Activated CD4-positive, alpha-beta T cell treated with anti-CD3 and anti-CD28 coated beads for 36 hours (primary cell): ENCODE measurements at regions of chr12 and their contacts with region 1.

Region 1: DNA sequence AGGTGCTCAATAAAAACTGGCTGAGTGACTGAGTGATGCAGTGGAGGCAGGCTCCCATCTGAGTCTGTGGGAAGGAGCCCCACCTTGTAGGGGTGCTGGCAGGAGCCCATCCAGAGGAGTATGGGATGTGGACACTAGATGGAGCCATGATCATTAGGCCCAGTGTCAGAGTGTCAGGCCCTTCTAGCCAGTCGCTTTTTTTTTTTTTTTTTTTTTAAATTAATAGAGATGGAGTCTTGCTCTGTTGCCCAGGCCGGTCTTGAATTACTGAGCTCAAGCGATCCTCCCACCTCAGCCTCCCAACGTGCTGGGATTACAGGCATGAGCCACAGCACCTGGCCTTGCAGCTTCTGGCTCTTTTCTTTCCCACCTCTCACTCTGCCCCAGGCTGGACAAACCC is 11.5 kb downstream of the RITA1 start:
- DNase-seq: peak; percentile 76
- ATAC-seq: peak; percentile 99
- H3K4me3 Mint-ChIP-seq: no peak overlapping the region
- H3K27ac Mint-ChIP-seq: no peak overlapping the region
- H3K4me1 Mint-ChIP-seq: peaks cover 2% of the 10 kb centered on the region
- H3K27me3 Mint-ChIP-seq: no peaks in the 10 kb centered on the region

Region 2: DNA sequence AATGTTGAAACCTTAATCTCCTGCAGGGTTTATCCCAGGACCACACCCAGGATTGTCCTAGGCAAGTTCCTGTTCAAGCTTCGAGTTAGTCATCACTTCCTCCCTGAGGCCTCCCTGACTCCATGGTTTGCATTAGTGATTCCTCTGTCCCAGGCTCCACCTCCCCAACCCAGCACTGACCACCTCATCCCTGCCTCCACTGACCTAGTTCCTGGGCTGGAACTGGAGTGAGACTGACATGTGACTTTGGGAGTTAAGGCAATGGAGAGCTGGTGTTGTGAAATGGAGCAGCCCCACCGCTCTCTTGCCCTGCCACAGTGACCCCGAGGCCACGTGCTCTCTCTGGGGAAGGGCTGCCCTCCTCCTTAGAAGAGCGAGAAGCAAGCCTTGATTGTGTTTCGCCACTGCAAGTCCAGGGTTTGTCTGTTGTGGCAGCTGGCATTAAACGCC is 156.2 kb before region 1 on chr12:
- CTCF ChIA-PET with region 1: no interaction called
- POLR2A ChIA-PET with region 1: no interaction called
- intact Hi-C with region 1: no loop called
- DNase-seq: no peak
- ATAC-seq: no peak
- H3K4me3 Mint-ChIP-seq: no peak overlapping the region
- H3K27ac Mint-ChIP-seq: no peak overlapping the region
- H3K4me1 Mint-ChIP-seq: no peaks in the 10 kb centered on the region
- H3K27me3 Mint-ChIP-seq: no peaks in the 10 kb centered on the region

Region 3: GRCh38 chr12:113149361-113150150 is 47.4 kb before region 1 on chr12 and contains the start of gene CFAP73:
- CTCF ChIA-PET with region 1: no interaction called
- POLR2A ChIA-PET with region 1: no interaction called
- intact Hi-C with region 1: no loop called
- DNase-seq: peak; percentile 56
- ATAC-seq: no peak
- H3K4me3 Mint-ChIP-seq: no peak within 1 kb of the TSS
- H3K27ac Mint-ChIP-seq: no peak within 1 kb of the TSS
- H3K4me1 Mint-ChIP-seq: peaks cover 14% of the 10 kb centered on the region
- H3K27me3 Mint-ChIP-seq: peaks cover 11% of the 10 kb centered on the region
- total RNA-seq, gene CFAP73: 0.86 to 1.1 TPM

Region 4: DNA sequence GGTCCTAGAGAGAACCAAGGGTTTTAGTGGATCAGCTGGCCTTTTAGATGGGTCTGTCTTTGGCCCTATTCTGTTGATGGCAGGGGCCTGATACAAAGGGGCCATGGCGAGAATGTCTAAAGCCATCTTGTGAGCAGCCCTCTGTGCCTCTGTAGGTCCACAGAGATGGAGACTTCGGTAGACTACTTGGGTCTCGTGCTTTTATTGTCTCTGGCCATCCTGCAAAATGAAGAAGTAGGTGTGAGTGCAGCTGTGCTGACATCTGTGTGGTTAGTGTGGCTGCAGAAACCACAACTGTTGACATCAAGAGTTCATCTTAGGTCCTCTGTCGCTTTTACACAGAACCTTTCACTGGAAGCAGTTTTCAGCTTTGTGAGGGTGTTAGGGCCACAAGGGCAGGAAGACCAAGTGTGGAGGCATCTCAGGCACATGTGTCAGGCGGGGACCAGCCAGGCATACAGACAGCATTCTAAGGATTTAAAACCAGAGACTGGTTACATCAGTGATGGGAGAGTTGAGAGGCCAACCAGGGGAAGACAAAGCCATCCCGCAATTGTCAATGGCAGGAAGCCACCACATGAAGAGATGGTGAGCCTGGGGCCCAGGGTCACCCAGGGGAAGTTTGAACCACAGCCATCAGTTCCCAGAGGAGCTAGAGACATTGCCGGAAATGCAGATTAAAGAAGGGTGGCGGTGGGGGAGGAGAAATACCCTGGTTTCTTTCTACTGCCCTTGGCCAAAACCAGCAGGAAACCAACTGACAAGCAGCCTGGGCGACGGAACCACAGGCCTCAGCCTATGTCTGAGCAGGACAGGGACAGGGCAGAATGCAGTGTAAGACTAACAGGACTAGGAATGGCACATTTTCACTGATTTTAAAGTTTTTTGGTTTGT is 11.3 kb after region 1 on chr12:
- CTCF ChIA-PET with region 1: interaction called, 10 read pairs
- POLR2A ChIA-PET with region 1: no interaction called
- intact Hi-C with region 1: no loop called
- DNase-seq: peak; percentile 85
- ATAC-seq: peak; percentile 86
- H3K4me3 Mint-ChIP-seq: peak overlapping the region; percentile 45
- H3K27ac Mint-ChIP-seq: peak overlapping the region; percentile 95
- H3K4me1 Mint-ChIP-seq: peaks cover 54% of the 10 kb centered on the region
- H3K27me3 Mint-ChIP-seq: no peaks in the 10 kb centered on the region

Region 5: GRCh38 chr12:113239811-113240331 is 42.9 kb after region 1 on chr12:
- CTCF ChIA-PET with region 1: interaction called, 3 read pairs
- POLR2A ChIA-PET with region 1: interaction called, 10 read pairs
- intact Hi-C with region 1: no loop called
- DNase-seq: no peak
- ATAC-seq: no peak
- H3K4me3 Mint-ChIP-seq: no peak overlapping the region
- H3K27ac Mint-ChIP-seq: no peak overlapping the region
- H3K4me1 Mint-ChIP-seq: peaks cover 13% of the 10 kb centered on the region
- H3K27me3 Mint-ChIP-seq: no peaks in the 10 kb centered on the region

Region 6: GRCh38 chr12:113261847-113262470 is 65.0 kb after region 1 on chr12:
- CTCF ChIA-PET with region 1: interaction called, 3 read pairs
- POLR2A ChIA-PET with region 1: no interaction called
- intact Hi-C with region 1: loop called in 1 of 2 experiments (anchors 5 kb)
- DNase-seq: peak; percentile 63
- ATAC-seq: peak; percentile 84
- H3K4me3 Mint-ChIP-seq: no peak overlapping the region
- H3K27ac Mint-ChIP-seq: peak overlapping the region; percentile 79
- H3K4me1 Mint-ChIP-seq: peaks cover 38% of the 10 kb centered on the region
- H3K27me3 Mint-ChIP-seq: no peaks in the 10 kb centered on the region

Region 7: GRCh38 chr12:113292091-113292490 is 95.1 kb after region 1 on chr12:
- CTCF ChIA-PET with region 1: no interaction called
- POLR2A ChIA-PET with region 1: no interaction called
- intact Hi-C with region 1: loop called in 1 of 2 experiments (anchors 5 kb)
- DNase-seq: no peak
- ATAC-seq: no peak
- H3K4me3 Mint-ChIP-seq: no peak overlapping the region
- H3K27ac Mint-ChIP-seq: no peak overlapping the region
- H3K4me1 Mint-ChIP-seq: no peaks in the 10 kb centered on the region
- H3K27me3 Mint-ChIP-seq: no peaks in the 10 kb centered on the region

Region 8: DNA sequence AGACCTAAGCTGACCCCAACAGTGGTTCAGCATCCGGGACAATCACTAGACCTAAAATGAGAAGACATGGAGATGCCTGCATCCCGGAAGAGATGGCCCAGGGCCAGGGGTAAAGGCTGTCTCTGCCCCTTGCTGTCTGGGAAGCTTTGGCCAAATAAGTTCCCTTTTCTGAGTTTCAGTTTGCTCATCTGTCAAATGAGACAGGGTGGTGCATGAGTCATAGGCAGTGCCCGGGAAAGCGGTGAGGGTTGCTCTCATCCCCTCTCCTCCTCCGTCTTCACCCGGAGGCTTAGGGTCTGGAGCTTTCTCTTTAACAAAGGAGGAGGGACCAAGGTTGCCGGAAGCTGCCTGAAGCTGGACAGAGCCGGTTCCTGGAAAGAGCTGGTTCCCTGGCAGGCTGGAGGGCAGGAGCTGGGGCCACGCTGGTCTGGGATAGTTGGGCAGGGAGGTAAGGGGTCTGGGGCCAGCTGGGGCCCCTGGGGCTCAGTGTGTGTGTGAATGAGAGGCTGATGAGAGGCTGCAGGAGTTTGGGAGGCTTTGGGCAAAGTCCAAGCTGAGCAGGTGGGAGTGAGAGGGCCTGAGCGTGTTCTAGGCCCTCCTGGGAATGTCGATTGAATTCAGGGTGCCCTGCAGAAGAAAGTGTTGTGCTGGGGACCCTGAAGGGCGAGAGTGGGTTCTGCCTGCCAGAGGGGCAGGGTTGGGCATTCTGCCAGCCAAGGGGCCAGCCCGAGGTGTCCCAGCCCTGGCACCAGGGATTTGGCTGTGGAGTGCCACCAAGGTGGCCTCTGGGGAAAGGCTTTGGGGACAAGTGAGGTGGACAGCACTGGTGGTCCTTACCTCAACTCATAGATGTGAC is 225.3 kb after region 1 on chr12 and contains the start of gene SDSL:
- CTCF ChIA-PET with region 1: interaction called, 4 read pairs
- POLR2A ChIA-PET with region 1: no interaction called
- intact Hi-C with region 1: loop called (anchors 1 to 5 kb)
- DNase-seq: peak; percentile 82
- ATAC-seq: peak; percentile 99
- H3K4me3 Mint-ChIP-seq: peak within 1 kb of the TSS; percentile 83
- H3K27ac Mint-ChIP-seq: peak within 1 kb of the TSS; percentile 96
- H3K4me1 Mint-ChIP-seq: peaks cover 11% of the 10 kb centered on the region
- H3K27me3 Mint-ChIP-seq: no peaks in the 10 kb centered on the region
- total RNA-seq, gene SDSL: 1.5 to 3.9 TPM